Activated T-helper 2 cell treated with anti-CD3 and anti-CD28 coated beads, Interferon-gamma antibody, Interleukin-2, Interleukin-4, amounts not matched to agents 10 μg/mL and 5 μg/mL and 100 μg/mL, durations not matched to agents 14 hours and 24 hours and 36 hours (primary cell): ENCODE measurements at regions of chr3 and their contacts with region 1.

Region 1: GRCh38 chr3:187919048-187919447 is 173.8 kb upstream of the BCL6 start:
- DNase-seq: peak; percentile 71
- H3K4me3 Mint-ChIP-seq: peak overlapping the region; percentile 63
- H3K27ac Mint-ChIP-seq: peak overlapping the region; percentile 90
- H3K4me1 Mint-ChIP-seq: peaks cover 72% of the 10 kb centered on the region
- H3K27me3 Mint-ChIP-seq: peaks cover 3% of the 10 kb centered on the region

Region 2: DNA sequence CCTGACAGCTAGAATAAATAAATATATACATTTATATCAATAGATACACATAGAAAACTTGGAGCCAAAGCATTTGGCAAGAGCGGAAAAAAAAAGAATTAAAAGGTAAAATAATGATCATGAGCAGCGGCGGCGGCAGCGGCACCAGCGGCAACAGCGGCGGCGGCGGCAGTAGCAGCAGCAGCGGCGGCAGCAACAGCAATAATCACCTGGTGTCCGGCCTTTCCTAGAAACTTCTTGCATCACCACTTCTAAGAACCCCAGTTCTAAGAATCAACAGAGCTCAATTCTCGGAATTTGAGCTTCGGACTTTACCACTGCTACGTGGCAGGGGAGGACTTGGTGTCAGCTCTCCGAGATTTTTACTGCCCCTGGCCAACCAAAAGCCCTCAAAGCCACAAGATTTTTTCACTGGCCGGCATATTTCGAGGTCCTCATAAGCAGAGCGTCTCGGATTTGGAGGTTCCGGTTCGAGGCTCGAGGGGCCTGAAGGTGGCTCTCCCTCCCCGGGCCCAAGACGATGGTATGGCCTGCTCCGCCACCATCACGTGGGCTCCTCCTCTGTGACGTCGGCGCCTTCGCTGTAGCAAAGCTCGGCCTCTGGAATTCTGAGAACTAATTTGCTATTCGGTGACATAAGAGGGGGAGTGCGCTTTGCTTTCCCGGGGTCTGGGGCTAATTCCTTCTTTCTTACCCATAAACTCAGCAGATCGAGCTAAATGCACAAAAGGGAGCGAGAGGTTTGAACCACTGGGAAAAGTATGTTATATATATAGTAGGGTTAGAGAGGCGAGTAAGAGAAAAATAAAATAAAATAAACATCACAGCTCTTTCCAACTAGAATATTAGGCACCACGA is 173.6 kb before region 1 on chr3 and contains the start of gene BCL6:
- intact Hi-C with region 1: loop called (anchors 1 kb)
- DNase-seq: peak; percentile 90
- H3K4me3 Mint-ChIP-seq: peak within 1 kb of the TSS; percentile 94
- H3K27ac Mint-ChIP-seq: peak within 1 kb of the TSS; percentile 99
- H3K4me1 Mint-ChIP-seq: peaks cover 55% of the 10 kb centered on the region
- H3K27me3 Mint-ChIP-seq: no peaks in the 10 kb centered on the region
- total RNA-seq, gene BCL6: 12.0 and 16.5 TPM in 2 replicates

Region 3: DNA sequence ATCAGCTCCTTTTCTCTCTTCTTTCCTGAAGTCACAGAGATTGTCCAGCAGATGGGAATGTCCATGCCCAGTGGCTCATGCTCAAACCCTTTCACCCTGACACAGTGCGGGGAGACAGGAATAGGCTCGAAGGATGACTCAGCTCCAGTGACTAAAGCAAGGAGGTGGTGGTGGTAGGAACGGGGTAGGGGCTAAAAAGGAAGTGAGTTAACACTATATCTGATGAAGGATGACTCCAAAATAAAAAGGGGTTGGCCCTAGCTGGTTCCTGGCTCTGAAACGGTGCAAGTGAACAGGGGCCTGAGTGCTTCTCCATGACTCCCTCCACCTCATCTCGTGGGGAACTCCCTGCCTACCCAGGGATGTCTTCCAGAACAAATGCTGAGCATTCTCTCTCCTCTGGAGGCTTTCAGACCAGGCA is 67.5 kb after region 1 on chr3:
- intact Hi-C with region 1: loop called (anchors 1 kb)
- DNase-seq: peak; percentile 35
- H3K4me3 Mint-ChIP-seq: peak overlapping the region; percentile 22
- H3K27ac Mint-ChIP-seq: peak overlapping the region; percentile 65
- H3K4me1 Mint-ChIP-seq: peaks cover 51% of the 10 kb centered on the region
- H3K27me3 Mint-ChIP-seq: no peaks in the 10 kb centered on the region

Region 4: DNA sequence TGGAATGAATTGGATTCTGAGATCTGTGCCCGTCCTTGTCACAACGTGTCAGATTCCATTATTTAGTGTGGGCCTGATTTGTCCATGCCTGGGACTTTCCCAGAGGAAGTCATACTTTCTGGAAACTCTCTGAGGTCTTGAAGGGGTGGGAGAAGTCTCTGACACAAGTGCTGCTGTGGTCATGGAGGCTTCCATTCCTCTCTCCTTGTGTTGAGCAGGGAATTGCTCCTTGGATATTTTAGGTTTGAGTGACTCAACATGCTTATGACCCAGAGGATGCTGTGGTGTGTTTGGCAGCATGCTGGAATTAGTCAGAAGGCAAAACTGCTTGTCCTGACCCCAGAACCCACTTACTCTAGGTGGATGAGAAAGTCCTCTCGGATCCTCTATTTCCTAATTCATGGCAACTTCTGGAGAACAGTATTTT is 367.1 kb after region 1 on chr3:
- intact Hi-C with region 1: loop called (anchors 1 kb)
- DNase-seq: no peak
- H3K4me3 Mint-ChIP-seq: no peak overlapping the region
- H3K27ac Mint-ChIP-seq: peak overlapping the region; percentile 5
- H3K4me1 Mint-ChIP-seq: peaks cover 52% of the 10 kb centered on the region
- H3K27me3 Mint-ChIP-seq: no peaks in the 10 kb centered on the region

Region 5: DNA sequence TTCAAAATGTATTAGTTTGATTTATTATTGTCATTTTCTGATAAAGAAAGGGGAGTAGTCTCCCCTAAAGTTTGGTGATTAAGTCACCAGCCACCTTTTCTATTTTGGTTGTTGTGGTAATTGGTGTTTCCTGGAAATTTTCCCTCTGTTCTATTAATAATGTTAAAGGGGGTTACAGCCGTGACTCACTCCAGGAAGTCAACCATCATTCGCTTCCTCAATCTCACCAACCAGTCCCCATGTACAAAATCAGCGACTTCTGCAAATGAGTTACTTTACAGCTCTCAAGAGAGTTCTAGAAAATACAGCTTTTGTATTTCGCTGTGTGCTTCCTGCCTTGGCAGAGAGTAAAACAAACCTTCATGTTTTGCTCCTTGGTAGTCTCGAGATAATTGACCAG is 520.0 kb after region 1 on chr3:
- intact Hi-C with region 1: loop called (anchors 5 kb)
- DNase-seq: peak; percentile 15
- H3K4me3 Mint-ChIP-seq: peak overlapping the region; percentile 45
- H3K27ac Mint-ChIP-seq: peak overlapping the region; percentile 79
- H3K4me1 Mint-ChIP-seq: peaks cover 47% of the 10 kb centered on the region
- H3K27me3 Mint-ChIP-seq: no peaks in the 10 kb centered on the region

Region 6: GRCh38 chr3:188914552-188914951 is 995.5 kb after region 1 on chr3:
- intact Hi-C with region 1: loop called (anchors 1 kb)
- DNase-seq: no peak
- H3K4me3 Mint-ChIP-seq: no peak overlapping the region
- H3K27ac Mint-ChIP-seq: peak overlapping the region; percentile 83
- H3K4me1 Mint-ChIP-seq: peaks cover 42% of the 10 kb centered on the region
- H3K27me3 Mint-ChIP-seq: peaks cover 3% of the 10 kb centered on the region